MCF 10A (cell line): ENCODE measurements at regions of chr1 and their contacts with region 1.

Region 1: GRCh38 chr1:96309783-96310182 is 411.8 kb upstream of the PTBP2 start:
- DNase-seq: peak; percentile 86
- H3K4me3 Mint-ChIP-seq: no peak overlapping the region
- H3K27ac Mint-ChIP-seq: no peak overlapping the region
- H3K4me1 Mint-ChIP-seq: peaks cover 22% of the 10 kb centered on the region
- H3K27me3 Mint-ChIP-seq: no peaks in the 10 kb centered on the region
- CTCF ChIP-seq: no peak

Region 2: GRCh38 chr1:96060622-96061021 is 249.2 kb before region 1 on chr1:
- CTCF ChIA-PET with region 1: no interaction called
- POLR2A ChIA-PET with region 1: no interaction called
- intact Hi-C with region 1: no loop called
- DNase-seq: no peak
- H3K4me3 Mint-ChIP-seq: no peak overlapping the region
- H3K27ac Mint-ChIP-seq: no peak overlapping the region
- H3K4me1 Mint-ChIP-seq: no peaks in the 10 kb centered on the region
- H3K27me3 Mint-ChIP-seq: no peaks in the 10 kb centered on the region
- CTCF ChIP-seq: no peak

Region 3: DNA sequence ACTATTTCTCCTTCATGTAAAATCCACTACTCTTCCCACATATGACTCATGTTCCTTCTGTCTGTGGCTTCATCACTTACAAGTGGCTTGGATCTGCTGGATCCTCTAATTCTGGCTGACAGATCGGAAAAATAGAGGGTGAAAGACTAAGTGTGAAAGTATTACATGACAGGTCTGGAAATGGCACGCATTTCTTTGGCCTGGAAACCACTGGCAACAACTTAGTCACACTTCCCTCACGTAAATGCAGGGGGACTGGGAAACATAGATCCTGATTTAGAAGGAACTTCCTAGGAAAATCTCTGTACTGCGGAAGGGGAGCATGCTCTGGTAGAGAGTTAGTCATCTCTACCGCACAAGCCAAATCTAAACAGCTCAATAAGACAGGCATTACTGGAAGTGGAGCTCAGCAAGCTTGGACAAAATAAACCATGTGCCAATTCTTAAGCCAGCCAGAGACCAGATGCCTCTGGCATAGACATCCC is 106.4 kb after region 1 on chr1:
- CTCF ChIA-PET with region 1: no interaction called
- POLR2A ChIA-PET with region 1: no interaction called
- intact Hi-C with region 1: loop called (anchors 5 kb)
- DNase-seq: peak; percentile 97
- H3K4me3 Mint-ChIP-seq: peak overlapping the region; percentile 44
- H3K27ac Mint-ChIP-seq: peak overlapping the region; percentile 84
- H3K4me1 Mint-ChIP-seq: peaks cover 33% of the 10 kb centered on the region
- H3K27me3 Mint-ChIP-seq: no peaks in the 10 kb centered on the region
- CTCF ChIP-seq: no peak

Region 4: DNA sequence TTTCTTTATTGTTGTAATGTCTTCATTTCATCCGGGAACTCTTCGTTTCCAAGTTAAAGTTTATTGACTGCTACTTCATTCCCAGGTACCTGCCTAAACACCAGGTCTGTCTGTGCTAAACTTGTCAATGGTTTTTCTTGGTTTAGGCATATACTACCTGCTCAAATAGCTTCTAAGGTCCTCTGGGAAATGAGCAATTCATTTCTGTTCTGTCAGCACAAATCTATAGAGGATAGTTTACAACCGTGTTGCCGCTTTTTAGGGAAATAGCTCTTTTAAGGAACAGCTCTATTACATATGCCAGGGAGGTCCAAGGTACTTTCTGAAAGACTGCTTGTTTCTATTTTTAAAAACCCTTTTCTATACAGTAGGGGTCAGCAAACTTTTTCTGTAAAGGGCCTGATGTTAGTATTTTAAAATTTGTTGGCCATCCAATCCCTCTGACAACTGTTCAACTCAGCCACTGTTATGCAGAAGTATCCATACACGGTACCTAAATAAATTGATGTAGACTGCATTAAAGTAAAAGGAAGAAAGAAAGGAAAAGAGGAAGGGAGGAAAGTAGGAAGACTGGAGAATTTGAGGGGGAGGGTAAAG is 189.1 kb after region 1 on chr1:
- CTCF ChIA-PET with region 1: no interaction called
- POLR2A ChIA-PET with region 1: no interaction called
- intact Hi-C with region 1: no loop called
- DNase-seq: no peak
- H3K4me3 Mint-ChIP-seq: no peak overlapping the region
- H3K27ac Mint-ChIP-seq: no peak overlapping the region
- H3K4me1 Mint-ChIP-seq: no peaks in the 10 kb centered on the region
- H3K27me3 Mint-ChIP-seq: no peaks in the 10 kb centered on the region
- CTCF ChIP-seq: no peak